GM13977 (cell line): ENCODE measurements at regions of chr20 and their contacts with region 1.

Region 1: DNA sequence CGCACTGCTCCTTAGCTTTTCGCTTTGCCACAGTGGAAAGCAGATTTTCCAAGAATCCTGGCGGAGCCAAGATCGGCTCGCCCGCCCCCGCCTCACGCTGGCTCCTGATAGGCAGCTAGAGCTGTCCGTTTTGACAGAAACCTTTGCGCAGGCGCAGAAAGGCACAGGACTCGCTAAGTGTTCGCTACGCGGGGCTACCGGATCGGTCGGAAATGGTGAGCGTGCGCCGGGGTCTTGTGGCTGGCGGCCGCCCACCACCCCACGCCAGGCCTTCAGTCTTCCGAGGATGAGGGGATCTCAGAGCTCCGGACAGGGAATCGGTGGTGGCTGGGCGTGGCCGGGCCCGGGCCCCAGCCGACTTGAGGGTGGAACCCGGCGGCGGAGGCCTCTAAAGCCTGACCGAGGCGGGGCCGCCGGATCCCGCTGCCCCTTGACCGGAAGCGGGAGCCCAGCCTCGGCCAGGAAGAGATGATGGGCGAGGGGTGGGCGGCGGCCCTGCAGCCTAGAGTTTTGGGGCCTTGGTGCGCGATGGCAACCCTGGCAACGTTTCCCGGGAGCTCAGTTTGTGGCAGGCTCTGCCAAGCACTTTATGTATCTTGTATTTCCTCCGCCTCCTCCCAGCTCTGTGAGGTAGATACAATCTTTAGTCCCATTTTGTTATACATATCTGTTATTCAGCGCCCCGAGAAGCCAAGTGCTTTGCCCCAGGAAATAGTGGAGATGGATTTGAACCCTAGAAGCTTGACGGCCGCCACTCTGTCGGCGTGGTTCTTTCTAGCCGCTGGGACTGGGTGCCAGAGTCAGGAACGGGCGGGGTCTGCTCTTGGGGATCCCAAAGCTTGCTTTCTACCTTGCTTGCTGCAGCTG is at the start of gene DYNLRB1:
- DNase-seq: peak; percentile 89
- CTCF ChIP-seq: no peak

Region 2: GRCh38 chr20:33933469-33933909 is 583.0 kb before region 1 on chr20:
- in situ Hi-C with region 1: no loop called
- DNase-seq: peak; percentile 71
- CTCF ChIP-seq: peak; percentile 58

Region 3: DNA sequence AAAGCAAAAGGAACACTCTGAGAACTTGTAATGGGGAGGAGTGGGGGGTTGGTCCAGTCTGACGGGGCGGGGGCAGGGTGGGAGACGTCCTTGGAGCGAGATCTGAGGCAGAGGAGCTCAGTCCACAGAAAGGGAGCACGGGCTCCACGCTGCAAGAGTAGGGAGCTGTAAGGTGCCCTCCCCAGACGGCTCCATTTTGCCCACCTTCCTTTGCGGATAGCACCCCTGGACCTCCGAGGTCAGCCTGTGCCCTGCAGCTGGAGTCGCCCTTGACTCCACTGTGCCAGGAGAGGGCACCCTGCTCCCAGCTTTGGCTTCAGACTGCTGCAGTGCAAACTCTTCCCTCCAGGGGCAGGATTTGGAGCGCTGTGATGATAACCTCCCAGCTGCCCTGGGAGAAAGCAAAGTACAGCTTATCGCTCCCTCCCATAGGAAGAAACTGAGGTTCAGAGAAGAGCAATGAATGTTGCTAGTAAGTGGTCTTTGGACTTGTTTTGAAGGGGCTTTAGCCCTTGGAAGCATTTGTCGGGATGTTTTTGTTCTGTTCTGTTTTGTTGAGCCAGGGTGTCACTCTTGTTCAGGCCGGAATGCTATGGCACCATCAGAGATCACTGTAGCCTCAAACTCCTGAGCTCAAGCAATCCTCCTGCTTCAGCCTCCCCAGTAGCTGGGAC is 203.8 kb before region 1 on chr20:
- in situ Hi-C with region 1: loop called (anchors 10 kb)
- DNase-seq: peak; percentile 87
- CTCF ChIP-seq: peak; percentile 100

Region 4: GRCh38 chr20:34654207-34654744 is 137.8 kb after region 1 on chr20:
- in situ Hi-C with region 1: no loop called
- DNase-seq: no peak
- CTCF ChIP-seq: no peak